Heart right ventricle (tissue), 16 donors: ENCODE measurements at regions of chr10 and their contacts with region 1.

Region 1: GRCh38 chr10:76778914-76779795 is 858.5 kb downstream of the KCNMA1 start:
- DNase-seq: no peak
- ATAC-seq: no peak
- H3K4me3 ChIP-seq: no peak overlapping the region
- H3K27ac ChIP-seq: peak overlapping the region in 1 of 10 donors; percentile 40
- H3K4me1 ChIP-seq: peaks cover 0 to 11% (median 0%) of the 10 kb centered on the region in 9 donors
- H3K27me3 ChIP-seq: no peaks in the 10 kb centered on the region
- CTCF ChIP-seq: peak in 3 of 9 donors; percentile 7 to 20 (median 13)

Region 2: DNA sequence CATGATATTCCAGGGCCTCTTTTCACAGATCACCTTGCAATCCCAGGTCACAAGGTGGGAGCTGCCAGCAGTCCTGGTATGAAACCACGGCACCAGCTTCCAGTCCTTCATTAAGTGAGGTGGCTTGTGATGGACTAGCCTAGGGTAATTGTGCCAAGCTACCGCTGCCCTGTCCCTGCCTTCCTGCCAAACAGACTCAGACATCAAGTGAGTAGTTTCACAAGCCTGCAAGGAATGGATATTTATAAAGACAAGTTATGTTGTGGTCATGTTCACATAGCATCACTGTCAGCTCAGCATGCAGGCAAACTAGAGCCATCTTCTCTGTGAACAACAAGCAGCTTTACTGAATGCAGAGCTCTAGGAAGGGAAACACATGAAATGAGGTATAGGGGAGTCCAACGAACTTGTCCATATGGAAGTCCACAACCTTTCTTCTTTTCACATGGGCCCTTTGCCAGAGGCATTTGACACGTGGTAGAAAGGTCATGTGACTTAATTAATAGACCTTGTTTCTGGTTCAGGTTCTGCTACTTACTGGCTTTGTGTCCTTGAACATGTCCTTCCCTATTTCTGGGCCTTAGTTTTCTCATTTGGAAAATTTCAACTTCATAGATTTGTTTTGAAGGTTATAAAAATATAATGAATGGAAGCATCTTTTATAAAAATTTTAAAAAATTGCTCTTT is 202.7 kb before region 1 on chr10:
- intact Hi-C with region 1: loop called in 1 of 10 experiments (anchors 10 kb)
- DNase-seq: peak in 1 of 2 donors; percentile 27
- ATAC-seq: peak; percentile 34 to 98 (median 76)
- H3K4me3 ChIP-seq: no peak overlapping the region
- H3K27ac ChIP-seq: peak overlapping the region in 3 of 10 donors; percentile 12 to 54 (median 31)
- H3K4me1 ChIP-seq: peaks cover 0 to 4% (median 0%) of the 10 kb centered on the region in 9 donors
- H3K27me3 ChIP-seq: no peaks in the 10 kb centered on the region
- CTCF ChIP-seq: no peak

Region 3: GRCh38 chr10:76632777-76633071 is 146.4 kb before region 1 on chr10:
- intact Hi-C with region 1: loop called in 2 of 10 experiments (anchors 10 kb)
- DNase-seq: no peak
- ATAC-seq: peak in 6 of 8 donors; percentile 30 to 74 (median 61)
- H3K4me3 ChIP-seq: peak overlapping the region in 2 of 10 donors; percentile 9 to 16
- H3K27ac ChIP-seq: no peak overlapping the region
- H3K4me1 ChIP-seq: peaks cover 0 to 16% (median 5%) of the 10 kb centered on the region in 9 donors
- H3K27me3 ChIP-seq: peaks cover 0 to 5% (median 0%) of the 10 kb centered on the region in 7 donors
- CTCF ChIP-seq: peak in 5 of 9 donors; percentile 19 to 41 (median 24)

Region 4: DNA sequence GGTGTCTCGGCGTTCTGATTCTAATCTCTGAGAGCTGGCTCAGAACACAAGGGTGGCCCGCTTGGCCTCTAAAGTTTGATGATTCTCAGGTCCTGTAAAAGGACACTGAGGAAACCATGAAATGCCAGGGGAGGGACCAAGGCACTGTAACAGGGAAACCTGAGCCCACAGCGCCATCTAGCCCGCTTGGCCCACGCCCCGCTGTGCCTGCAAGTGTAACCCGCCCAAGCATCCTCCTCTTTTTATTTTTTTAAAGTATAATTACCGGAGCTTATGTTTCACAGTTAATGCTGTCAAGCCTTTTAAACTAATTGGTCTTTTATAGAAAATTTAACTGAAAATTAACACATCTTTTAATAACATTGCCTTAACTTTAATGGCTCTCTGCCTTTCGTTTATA is 123.8 kb after region 1 on chr10:
- intact Hi-C with region 1: loop called in 1 of 10 experiments (anchors 10 kb)
- DNase-seq: peak; percentile 71 to 78
- ATAC-seq: peak in 7 of 8 donors; percentile 77 to 89 (median 82)
- H3K4me3 ChIP-seq: no peak overlapping the region
- H3K27ac ChIP-seq: no peak overlapping the region
- H3K4me1 ChIP-seq: peaks cover 0 to 3% (median 0%) of the 10 kb centered on the region in 9 donors
- H3K27me3 ChIP-seq: no peaks in the 10 kb centered on the region
- CTCF ChIP-seq: peak in 7 of 9 donors; percentile 43 to 71 (median 58)

Region 5: DNA sequence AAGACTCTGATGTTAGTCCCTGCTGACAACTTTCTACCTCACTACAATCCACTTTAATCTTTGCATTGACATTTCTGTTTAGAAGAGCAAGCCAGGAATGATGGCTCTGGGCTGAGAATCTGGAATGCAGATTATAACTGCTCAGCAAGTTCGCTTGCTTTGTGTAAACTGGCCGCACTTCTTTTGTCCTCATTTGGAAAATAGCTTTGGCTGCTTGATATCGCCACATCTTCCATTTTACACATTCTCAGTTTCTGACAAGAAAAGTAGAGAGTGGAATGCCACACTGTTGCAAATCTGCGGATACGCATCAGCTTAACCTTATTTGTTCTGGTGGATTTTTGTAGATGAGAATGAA is 428.7 kb after region 1 on chr10:
- intact Hi-C with region 1: no loop called
- DNase-seq: no peak
- ATAC-seq: no peak
- H3K4me3 ChIP-seq: no peak overlapping the region
- H3K27ac ChIP-seq: no peak overlapping the region
- H3K4me1 ChIP-seq: no peaks in the 10 kb centered on the region
- H3K27me3 ChIP-seq: peaks cover 0 to 48% (median 11%) of the 10 kb centered on the region in 7 donors
- CTCF ChIP-seq: no peak